Mammary epithelial cell (primary cell): ENCODE measurements at regions of chr17 and their contacts with region 1.

Region 1: GRCh38 chr17:73663564-73664160 is 19.4 kb upstream of the SDK2 start:
- DNase-seq: no peak
- H3K4me3 ChIP-seq: no peak overlapping the region
- H3K27ac ChIP-seq: no peak overlapping the region
- H3K4me1 ChIP-seq: no peaks in the 10 kb centered on the region
- H3K27me3 ChIP-seq: no peaks in the 10 kb centered on the region
- CTCF ChIP-seq: no peak

Region 2: GRCh38 chr17:73420895-73421294 is 242.8 kb before region 1 on chr17:
- CTCF ChIA-PET with region 1: no interaction called
- dilution Hi-C with region 1: no loop called
- in situ Hi-C with region 1: no loop called
- intact Hi-C with region 1: no loop called
- DNase-seq: peak; percentile 83
- H3K4me3 ChIP-seq: no peak overlapping the region
- H3K27ac ChIP-seq: no peak overlapping the region
- H3K4me1 ChIP-seq: peaks cover 4% of the 10 kb centered on the region
- H3K27me3 ChIP-seq: no peaks in the 10 kb centered on the region
- CTCF ChIP-seq: peak; percentile 30 to 33

Region 3: GRCh38 chr17:73586921-73587602 is 76.6 kb before region 1 on chr17:
- CTCF ChIA-PET with region 1: no interaction called
- dilution Hi-C with region 1: loop called (anchors 5 kb)
- in situ Hi-C with region 1: no loop called
- intact Hi-C with region 1: no loop called
- DNase-seq: no peak
- H3K4me3 ChIP-seq: no peak overlapping the region
- H3K27ac ChIP-seq: no peak overlapping the region
- H3K4me1 ChIP-seq: peaks cover 15% of the 10 kb centered on the region
- H3K27me3 ChIP-seq: no peaks in the 10 kb centered on the region
- CTCF ChIP-seq: peak in 1 of 2 donors; percentile 51